ENCODE measurements at regions of chrX and their contacts with region 1.

Region 1: DNA sequence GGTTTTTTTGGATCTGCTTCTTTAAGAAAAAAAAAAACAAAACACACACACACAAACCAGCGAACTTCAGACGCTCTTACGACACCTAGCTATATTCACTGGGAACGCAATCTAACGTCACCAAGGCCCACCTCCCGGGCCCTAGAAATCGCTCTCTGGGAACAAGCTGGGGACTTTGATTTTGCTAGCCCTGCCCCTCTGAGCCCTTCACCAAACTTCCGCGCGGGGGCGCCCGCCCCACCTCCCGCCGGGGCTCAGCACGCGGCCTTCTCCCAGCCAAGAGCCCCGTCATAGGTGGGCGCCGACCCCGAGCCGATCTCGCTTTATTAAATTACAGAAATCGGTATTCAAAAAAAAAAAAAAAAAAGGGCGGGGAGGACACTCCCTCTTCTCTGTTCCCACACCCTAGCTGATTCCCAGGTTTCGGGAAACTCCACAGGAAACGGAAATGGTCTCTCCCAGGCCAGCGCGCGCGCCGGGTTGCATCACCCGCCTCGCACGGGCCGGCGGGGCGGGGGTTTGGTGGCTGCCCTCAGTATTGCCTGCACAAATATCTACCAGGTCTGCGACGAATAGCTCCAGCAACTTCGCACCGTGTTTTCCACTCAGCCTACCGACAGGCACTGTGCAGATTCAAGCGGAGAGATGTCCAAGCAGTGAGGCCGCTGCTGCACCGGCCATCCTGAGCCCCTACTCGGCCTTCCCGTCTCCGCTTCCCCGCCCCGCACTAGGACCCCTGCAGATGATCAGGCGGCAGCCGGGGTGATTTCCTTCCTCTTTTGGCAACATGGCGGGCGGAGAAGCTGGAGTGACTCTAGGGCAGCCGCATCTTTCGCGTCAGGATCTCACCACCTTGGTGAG is at the start of gene EIF2S3:
- DNase-seq: peak; percentile 75 to 97 (median 93)
- ATAC-seq: peak; percentile 90
- H3K4me3 ChIP-seq: peak within 1 kb of the TSS; percentile 68
- H3K4me3 Mint-ChIP-seq: peak within 1 kb of the TSS in 2 of 10 donors; percentile 96 to 99
- H3K27ac ChIP-seq: no peak within 1 kb of the TSS
- H3K27ac Mint-ChIP-seq: peak within 1 kb of the TSS in 5 of 9 donors; percentile 97 to 100 (median 99)
- H3K4me1 ChIP-seq: peaks cover 0 to 6% of the 10 kb centered on the region in 2 donors
- H3K4me1 Mint-ChIP-seq: peaks cover 0 to 25% (median 4%) of the 10 kb centered on the region in 7 donors
- H3K27me3 ChIP-seq: no peaks in the 10 kb centered on the region
- H3K27me3 Mint-ChIP-seq: no peaks in the 10 kb centered on the region
- total RNA-seq, gene EIF2S3: 174 to 270 (median 226) TPM

Region 2: DNA sequence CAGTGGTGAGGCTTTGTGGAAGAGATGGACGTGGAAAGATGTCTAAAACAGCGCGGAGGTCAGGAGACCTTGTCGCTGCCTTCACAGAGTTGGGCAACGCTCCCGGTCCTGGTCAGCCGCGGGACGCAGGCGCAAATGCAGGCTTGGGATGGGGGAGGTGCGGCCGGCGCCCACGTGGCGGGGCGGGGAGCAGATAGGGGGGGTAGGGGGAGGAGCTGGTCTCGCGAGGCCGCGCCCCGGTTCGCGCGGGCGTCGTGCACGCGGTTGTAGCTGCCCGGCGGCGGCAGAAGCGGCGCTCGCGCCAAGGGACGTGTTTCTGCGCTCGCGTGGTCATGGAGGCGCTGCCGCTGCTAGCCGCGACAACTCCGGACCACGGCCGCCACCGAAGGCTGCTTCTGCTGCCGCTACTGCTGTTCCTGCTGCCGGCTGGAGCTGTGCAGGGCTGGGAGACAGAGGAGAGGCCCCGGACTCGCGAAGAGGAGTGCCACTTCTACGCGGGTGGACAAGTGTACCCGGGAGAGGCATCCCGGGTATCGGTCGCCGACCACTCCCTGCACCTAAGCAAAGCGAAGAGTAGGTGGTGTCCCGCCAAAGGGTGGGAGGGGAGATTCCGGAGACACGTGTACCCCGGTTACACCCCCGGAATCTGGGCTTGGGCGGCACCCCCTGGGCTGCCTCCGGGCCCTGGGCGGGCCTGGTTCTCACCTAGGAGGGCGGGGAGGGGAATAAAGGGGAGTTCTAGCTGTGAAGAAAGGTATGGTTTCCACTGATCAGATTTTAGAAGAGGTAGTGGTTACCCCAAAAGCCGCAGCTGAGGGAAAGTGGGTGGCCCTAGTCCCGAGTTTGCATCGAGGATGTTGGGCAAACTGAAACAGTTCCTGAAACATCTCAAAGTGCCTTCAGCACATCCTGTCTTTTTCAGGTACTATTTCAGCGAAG is 386.9 kb before region 1 on chrX and contains the start of gene PRDX4:
- CTCF ChIA-PET with region 1: no interaction called
- POLR2A ChIA-PET with region 1: no interaction called
- intact Hi-C with region 1: loop called (anchors 1 kb)
- DNase-seq: peak; percentile 42 to 79 (median 57)
- ATAC-seq: peak; percentile 96
- H3K4me3 ChIP-seq: peak within 1 kb of the TSS; percentile 73
- H3K4me3 Mint-ChIP-seq: peak within 1 kb of the TSS; percentile 80 to 94 (median 92)
- H3K27ac ChIP-seq: peak within 1 kb of the TSS; percentile 85
- H3K27ac Mint-ChIP-seq: peak within 1 kb of the TSS; percentile 71 to 97 (median 89)
- H3K4me1 ChIP-seq: peaks cover 10 to 12% of the 10 kb centered on the region in 2 donors
- H3K4me1 Mint-ChIP-seq: peaks cover 6 to 29% (median 23%) of the 10 kb centered on the region in 7 donors
- H3K27me3 ChIP-seq: no peaks in the 10 kb centered on the region
- H3K27me3 Mint-ChIP-seq: no peaks in the 10 kb centered on the region
- total RNA-seq, gene PRDX4: 8.0 to 33.3 (median 12.1) TPM

Region 3: GRCh38 chrX:23732704-23733103 is 321.7 kb before region 1 on chrX:
- CTCF ChIA-PET with region 1: no interaction called
- POLR2A ChIA-PET with region 1: interaction called, 3 read pairs
- intact Hi-C with region 1: loop called in 1 of 2 experiments (anchors 2 kb)
- DNase-seq: no peak
- ATAC-seq: peak; percentile 48
- H3K4me3 ChIP-seq: no peak overlapping the region
- H3K4me3 Mint-ChIP-seq: peak overlapping the region in 1 of 10 donors; percentile 62
- H3K27ac ChIP-seq: no peak overlapping the region
- H3K27ac Mint-ChIP-seq: peak overlapping the region in 2 of 9 donors; percentile 46 to 82
- H3K4me1 ChIP-seq: peaks cover 0 to 6% of the 10 kb centered on the region in 2 donors
- H3K4me1 Mint-ChIP-seq: peaks cover 0 to 26% (median 0%) of the 10 kb centered on the region in 7 donors
- H3K27me3 ChIP-seq: no peaks in the 10 kb centered on the region
- H3K27me3 Mint-ChIP-seq: no peaks in the 10 kb centered on the region

Region 4: GRCh38 chrX:23901805-23902204 is 152.6 kb before region 1 on chrX:
- CTCF ChIA-PET with region 1: interaction called, 16 read pairs
- POLR2A ChIA-PET with region 1: interaction called, 28 read pairs
- intact Hi-C with region 1: loop called in 1 of 2 experiments (anchors 1 kb)
- DNase-seq: peak in 6 of 9 donors; percentile 18 to 59 (median 40)
- ATAC-seq: peak; percentile 89
- H3K4me3 ChIP-seq: no peak overlapping the region
- H3K4me3 Mint-ChIP-seq: no peak overlapping the region
- H3K27ac ChIP-seq: no peak overlapping the region
- H3K27ac Mint-ChIP-seq: no peak overlapping the region
- H3K4me1 ChIP-seq: peaks cover 0 to 2% of the 10 kb centered on the region in 2 donors
- H3K4me1 Mint-ChIP-seq: peaks cover 0 to 11% (median 1%) of the 10 kb centered on the region in 7 donors
- H3K27me3 ChIP-seq: no peaks in the 10 kb centered on the region
- H3K27me3 Mint-ChIP-seq: no peaks in the 10 kb centered on the region

Region 5: GRCh38 chrX:23952984-23953907 is 101.2 kb before region 1 on chrX:
- CTCF ChIA-PET with region 1: no interaction called
- POLR2A ChIA-PET with region 1: interaction called, 7 read pairs
- intact Hi-C with region 1: loop called (anchors 1 kb)
- DNase-seq: peak in 8 of 9 donors; percentile 31 to 63 (median 46)
- ATAC-seq: peak; percentile 93
- H3K4me3 ChIP-seq: peak overlapping the region; percentile 84
- H3K4me3 Mint-ChIP-seq: peak overlapping the region; percentile 72 to 97 (median 88)
- H3K27ac ChIP-seq: peak overlapping the region; percentile 80
- H3K27ac Mint-ChIP-seq: peak overlapping the region; percentile 78 to 99 (median 91)
- H3K4me1 ChIP-seq: peaks cover 0 to 12% of the 10 kb centered on the region in 2 donors
- H3K4me1 Mint-ChIP-seq: peaks cover 7 to 55% (median 20%) of the 10 kb centered on the region in 7 donors
- H3K27me3 ChIP-seq: no peaks in the 10 kb centered on the region
- H3K27me3 Mint-ChIP-seq: no peaks in the 10 kb centered on the region

Region 6: GRCh38 chrX:24464836-24465531 is 410.6 kb after region 1 on chrX and contains the start of gene PDK3:
- CTCF ChIA-PET with region 1: no interaction called
- POLR2A ChIA-PET with region 1: no interaction called
- intact Hi-C with region 1: loop called in 1 of 2 experiments (anchors 1 kb)
- DNase-seq: peak; percentile 81 to 92 (median 89)
- ATAC-seq: peak; percentile 98
- H3K4me3 ChIP-seq: peak within 1 kb of the TSS; percentile 70
- H3K4me3 Mint-ChIP-seq: peak within 1 kb of the TSS; percentile 48 to 90 (median 85)
- H3K27ac ChIP-seq: peak within 1 kb of the TSS; percentile 92
- H3K27ac Mint-ChIP-seq: peak within 1 kb of the TSS; percentile 77 to 97 (median 93)
- H3K4me1 ChIP-seq: peaks cover 14 to 24% of the 10 kb centered on the region in 2 donors
- H3K4me1 Mint-ChIP-seq: peaks cover 7 to 37% (median 33%) of the 10 kb centered on the region in 7 donors
- H3K27me3 ChIP-seq: no peaks in the 10 kb centered on the region
- H3K27me3 Mint-ChIP-seq: no peaks in the 10 kb centered on the region
- total RNA-seq, gene PDK3: 17.4 to 29.4 (median 28.5) TPM

Region 7: DNA sequence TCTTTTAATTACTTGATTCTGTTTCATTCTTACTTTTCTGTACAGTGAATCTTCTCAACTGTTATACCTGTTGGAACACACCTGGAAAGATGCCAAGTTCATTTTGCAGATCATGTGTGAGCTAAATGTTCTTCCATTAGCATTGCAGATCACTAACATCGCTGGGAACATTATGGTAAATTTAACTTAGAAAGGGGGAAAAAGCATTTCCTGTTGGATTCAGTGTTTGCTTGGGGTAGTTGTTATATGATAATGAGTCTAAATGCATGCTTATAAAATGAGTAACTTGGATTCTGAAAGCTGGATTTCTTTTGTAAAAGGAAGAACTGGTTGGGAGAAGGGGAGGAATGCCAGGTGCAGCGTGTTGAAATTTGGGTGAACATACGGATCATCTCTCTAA is 686.9 kb after region 1 on chrX:
- CTCF ChIA-PET with region 1: no interaction called
- POLR2A ChIA-PET with region 1: no interaction called
- intact Hi-C with region 1: no loop called
- DNase-seq: no peak
- ATAC-seq: no peak
- H3K4me3 ChIP-seq: no peak overlapping the region
- H3K4me3 Mint-ChIP-seq: no peak overlapping the region
- H3K27ac ChIP-seq: no peak overlapping the region
- H3K27ac Mint-ChIP-seq: no peak overlapping the region
- H3K4me1 ChIP-seq: no peaks in the 10 kb centered on the region
- H3K4me1 Mint-ChIP-seq: no peaks in the 10 kb centered on the region
- H3K27me3 ChIP-seq: no peaks in the 10 kb centered on the region
- H3K27me3 Mint-ChIP-seq: no peaks in the 10 kb centered on the region

Measured in naive thymus-derived CD4-positive, alpha-beta T cell (primary cell).